Endothelial cell of umbilical vein (primary cell): ENCODE measurements at regions of chr2 and their contacts with region 1.

Region 1: DNA sequence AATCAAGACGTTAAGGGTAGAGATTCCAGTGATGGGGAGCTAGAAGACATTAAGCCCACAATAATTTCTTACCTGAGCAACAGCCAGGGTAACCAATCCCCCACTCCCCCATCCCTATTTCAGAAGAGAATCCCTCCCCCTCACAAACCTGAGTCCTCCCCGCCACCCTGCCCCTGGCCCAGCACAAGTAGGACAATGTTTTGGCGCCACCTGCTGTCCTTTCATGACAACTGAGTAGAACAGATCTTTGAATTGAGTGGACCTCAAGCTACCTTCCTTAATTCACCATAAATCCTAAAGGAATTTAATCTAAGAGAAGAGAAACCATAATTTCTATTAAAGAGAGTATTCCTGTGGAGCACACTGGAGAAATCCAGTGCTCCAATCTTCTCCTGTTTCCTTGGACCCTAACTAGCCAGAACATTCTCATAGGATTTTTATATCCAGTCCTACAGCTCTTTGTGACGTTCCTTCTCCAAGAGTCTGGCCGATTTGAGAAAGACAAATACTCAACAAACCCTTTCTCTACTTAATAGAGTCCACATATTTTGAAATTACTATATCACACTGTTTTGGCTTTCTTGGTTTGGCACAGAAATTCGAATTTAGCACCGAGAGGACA is 41.1 kb downstream of the NHEJ1 start:
- DNase-seq: peak; percentile 45
- H3K4me3 ChIP-seq: no peak overlapping the region
- H3K27ac ChIP-seq: no peak overlapping the region
- H3K4me1 ChIP-seq: no peaks in the 10 kb centered on the region
- H3K27me3 ChIP-seq: no peaks in the 10 kb centered on the region
- CTCF ChIP-seq: peak; percentile 57 to 64
- POLR2A ChIP-seq: no peak

Region 2: DNA sequence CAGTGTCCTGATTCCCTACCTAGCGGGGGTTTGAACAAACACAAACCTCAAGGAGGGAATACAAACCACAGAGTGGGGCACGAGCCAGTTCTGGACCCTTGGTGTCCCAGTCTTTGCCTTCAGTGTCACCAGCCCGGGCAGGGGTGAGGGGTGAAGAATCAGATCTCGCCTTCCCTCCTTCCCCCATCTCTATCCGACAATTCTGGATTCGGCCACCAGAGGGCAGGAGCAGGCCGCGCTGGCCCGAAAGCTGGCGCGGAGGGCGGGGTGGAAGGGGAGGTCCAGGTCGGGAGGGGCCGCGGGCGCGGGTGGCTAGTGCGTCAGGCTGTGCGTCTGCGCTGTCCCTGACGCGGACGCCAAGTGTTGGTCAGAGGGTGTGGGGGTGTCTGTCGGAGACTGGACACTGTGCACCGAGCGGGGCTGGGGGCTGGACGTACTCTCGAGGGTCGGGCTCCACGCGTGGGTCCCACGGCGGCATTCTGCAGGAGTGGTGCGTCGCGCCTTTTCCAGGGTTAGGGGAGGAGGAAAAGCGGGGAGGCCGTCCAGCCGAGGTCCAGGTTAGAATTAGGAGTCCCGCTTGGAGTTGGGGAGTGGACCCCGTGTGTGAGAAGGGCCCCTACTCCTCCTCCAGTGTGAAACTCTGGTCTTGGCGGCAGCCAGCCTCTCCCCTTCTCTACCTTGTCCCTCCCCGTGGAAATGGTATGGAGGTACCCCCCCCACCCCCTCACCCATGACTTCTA is 123.4 kb before region 1 on chr2:
- CTCF ChIA-PET with region 1: interaction called, 12 read pairs
- POLR2A ChIA-PET with region 1: no interaction called
- dilution Hi-C with region 1: no loop called
- intact Hi-C with region 1: no loop called
- DNase-seq: peak; percentile 65
- H3K4me3 ChIP-seq: no peak overlapping the region
- H3K27ac ChIP-seq: no peak overlapping the region
- H3K4me1 ChIP-seq: peaks cover 5% of the 10 kb centered on the region
- H3K27me3 ChIP-seq: peaks cover 79 to 83% of the 10 kb centered on the region in 2 experiments
- CTCF ChIP-seq: peak; percentile 73 to 94
- POLR2A ChIP-seq: no peak

Region 3: DNA sequence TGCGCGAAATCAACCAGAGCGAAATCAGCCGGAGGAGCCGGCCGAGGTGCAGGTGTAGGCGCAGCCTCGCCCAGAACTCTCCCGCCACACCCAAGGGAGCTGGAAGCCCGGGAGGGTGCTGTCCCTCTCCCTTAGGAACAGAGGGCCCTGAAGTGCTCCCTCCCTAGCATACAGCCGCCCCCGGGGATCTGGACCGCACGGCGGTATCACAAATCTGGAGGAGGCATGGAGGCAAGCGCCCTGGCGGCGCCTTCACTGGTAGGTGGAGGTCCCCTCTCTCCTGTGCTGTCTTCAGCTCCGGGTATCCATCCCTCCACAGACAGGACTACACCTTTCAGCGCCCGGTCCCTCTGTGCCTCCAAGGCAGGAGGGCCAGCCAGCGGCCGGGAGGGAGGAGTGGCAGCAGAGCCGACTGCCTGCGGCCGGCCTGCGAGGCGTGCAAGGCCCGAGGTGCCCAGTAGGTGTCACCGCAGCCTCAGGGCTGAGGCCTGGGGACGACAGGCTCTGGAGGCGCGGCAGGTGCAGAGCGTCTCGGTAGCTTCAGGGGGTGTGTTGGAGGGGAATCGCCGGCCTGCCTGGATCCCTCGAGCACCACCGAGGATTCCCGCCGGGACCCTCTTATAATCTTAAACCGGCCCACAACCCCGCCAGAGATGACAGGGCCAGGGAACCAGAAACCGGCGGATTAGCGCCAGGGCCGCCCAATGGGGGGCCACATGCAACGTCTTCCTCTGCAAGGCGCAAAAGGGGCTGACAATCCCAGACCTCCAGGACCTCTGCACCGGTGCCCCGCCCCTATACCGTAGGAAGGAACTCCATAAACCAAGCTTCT is 61.6 kb before region 1 on chr2:
- CTCF ChIA-PET with region 1: interaction called, 178 read pairs
- POLR2A ChIA-PET with region 1: no interaction called
- dilution Hi-C with region 1: no loop called
- intact Hi-C with region 1: loop called (anchors 1 kb)
- DNase-seq: peak; percentile 60
- H3K4me3 ChIP-seq: no peak overlapping the region
- H3K27ac ChIP-seq: no peak overlapping the region
- H3K4me1 ChIP-seq: no peaks in the 10 kb centered on the region
- H3K27me3 ChIP-seq: peaks cover 52 to 66% of the 10 kb centered on the region in 2 experiments
- CTCF ChIP-seq: peak; percentile 85 to 94
- POLR2A ChIP-seq: no peak

Region 4: DNA sequence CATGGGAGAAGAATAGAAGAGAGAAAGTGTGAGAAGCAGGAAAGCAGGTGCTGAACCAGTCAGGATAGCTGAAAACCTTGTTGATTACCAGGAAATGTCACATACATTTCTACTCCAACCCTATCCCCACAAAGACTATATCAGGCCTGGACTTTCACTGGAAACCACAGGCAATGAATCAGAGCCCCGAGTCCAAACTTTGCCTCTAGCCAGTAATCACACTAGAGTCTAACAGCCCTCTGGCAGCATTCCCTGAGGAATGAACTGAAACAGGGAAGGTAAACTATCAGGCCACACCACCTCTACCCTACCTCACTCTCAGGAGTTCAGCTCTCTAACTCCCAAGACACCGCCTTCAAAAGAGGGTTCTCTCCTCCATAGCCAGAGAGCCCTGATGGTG is 40.1 kb before region 1 on chr2:
- CTCF ChIA-PET with region 1: interaction called, 135 read pairs
- POLR2A ChIA-PET with region 1: no interaction called
- dilution Hi-C with region 1: no loop called
- intact Hi-C with region 1: no loop called
- DNase-seq: no peak
- H3K4me3 ChIP-seq: no peak overlapping the region
- H3K27ac ChIP-seq: no peak overlapping the region
- H3K4me1 ChIP-seq: no peaks in the 10 kb centered on the region
- H3K27me3 ChIP-seq: no peaks in the 10 kb centered on the region
- CTCF ChIP-seq: no peak
- POLR2A ChIP-seq: no peak

Region 5: DNA sequence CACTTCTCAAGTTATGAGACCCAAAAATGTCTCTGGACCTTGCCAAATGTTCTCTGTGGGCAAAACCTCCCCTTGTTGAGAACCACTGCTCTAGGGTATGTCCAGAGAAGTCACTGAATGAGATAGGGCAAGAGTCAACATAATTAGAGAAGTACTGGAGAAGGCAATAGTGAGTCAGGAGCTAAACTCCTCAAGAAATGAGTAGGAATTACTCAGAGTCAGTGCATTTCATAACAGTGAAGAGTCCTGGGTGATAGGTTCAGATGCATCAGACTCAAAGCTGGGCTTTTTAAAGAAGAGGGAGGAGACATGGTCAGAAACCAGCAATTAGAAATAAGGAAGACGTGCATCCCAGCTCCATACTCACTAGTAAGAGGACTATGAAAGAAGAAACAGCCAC is 20.2 kb before region 1 on chr2:
- CTCF ChIA-PET with region 1: interaction called, 51 read pairs
- POLR2A ChIA-PET with region 1: no interaction called
- dilution Hi-C with region 1: no loop called
- intact Hi-C with region 1: no loop called
- DNase-seq: no peak
- H3K4me3 ChIP-seq: no peak overlapping the region
- H3K27ac ChIP-seq: no peak overlapping the region
- H3K4me1 ChIP-seq: no peaks in the 10 kb centered on the region
- H3K27me3 ChIP-seq: no peaks in the 10 kb centered on the region
- CTCF ChIP-seq: no peak
- POLR2A ChIP-seq: no peak

Region 6: GRCh38 chr2:219109471-219109870 is 10.1 kb before region 1 on chr2:
- CTCF ChIA-PET with region 1: interaction called, 51 read pairs
- POLR2A ChIA-PET with region 1: no interaction called
- dilution Hi-C with region 1: no loop called
- intact Hi-C with region 1: no loop called
- DNase-seq: no peak
- H3K4me3 ChIP-seq: no peak overlapping the region
- H3K27ac ChIP-seq: no peak overlapping the region
- H3K4me1 ChIP-seq: no peaks in the 10 kb centered on the region
- H3K27me3 ChIP-seq: no peaks in the 10 kb centered on the region
- CTCF ChIP-seq: no peak
- POLR2A ChIP-seq: no peak

Region 7: GRCh38 chr2:219149667-219150066 is 30.1 kb after region 1 on chr2:
- CTCF ChIA-PET with region 1: interaction called, 42 read pairs
- POLR2A ChIA-PET with region 1: no interaction called
- dilution Hi-C with region 1: no loop called
- intact Hi-C with region 1: no loop called
- DNase-seq: peak; percentile 59
- H3K4me3 ChIP-seq: no peak overlapping the region
- H3K27ac ChIP-seq: no peak overlapping the region
- H3K4me1 ChIP-seq: no peaks in the 10 kb centered on the region
- H3K27me3 ChIP-seq: no peaks in the 10 kb centered on the region
- CTCF ChIP-seq: no peak
- POLR2A ChIP-seq: no peak